RWPE1 (cell line): ENCODE measurements at regions of chr20 and their contacts with region 1.

Region 1: DNA sequence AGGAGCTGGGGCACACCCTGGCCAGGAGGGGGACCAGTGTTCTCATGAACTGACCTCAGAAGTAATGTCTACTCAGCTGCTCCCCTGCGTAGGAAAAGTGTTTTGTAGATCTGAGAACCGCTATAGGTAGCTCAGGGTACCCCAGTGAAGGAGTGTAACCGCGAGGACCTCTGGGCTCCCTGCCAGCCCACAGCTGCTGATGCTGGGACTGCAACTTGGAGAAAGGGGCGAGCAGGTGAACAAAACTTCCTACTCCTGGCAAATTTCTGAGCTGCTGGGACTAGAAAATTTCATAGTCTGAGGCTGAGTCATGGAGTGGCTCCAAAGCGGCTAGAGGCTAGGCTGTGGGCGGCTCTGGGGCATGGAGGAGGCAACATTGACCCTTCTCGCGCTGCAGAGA is 51.9 kb downstream of the PYGB start:
- DNase-seq: peak; percentile 32
- H3K27ac ChIP-seq: peak overlapping the region; percentile 73
- CTCF ChIP-seq: no peak

Region 2: GRCh38 chr20:25195014-25195961 is 104.5 kb before region 1 on chr20 and contains the start of gene ENTPD6:
- CTCF ChIA-PET with region 1: no interaction called
- POLR2A ChIA-PET with region 1: no interaction called
- DNase-seq: peak; percentile 99
- H3K27ac ChIP-seq: peak within 1 kb of the TSS; percentile 78
- CTCF ChIP-seq: no peak; the same call in 1 of the 2 replicates

Region 3: GRCh38 chr20:25399037-25399430 is 99.2 kb after region 1 on chr20:
- CTCF ChIA-PET with region 1: interaction called, 10 read pairs
- POLR2A ChIA-PET with region 1: no interaction called
- DNase-seq: peak; percentile 65
- H3K27ac ChIP-seq: no peak overlapping the region
- CTCF ChIP-seq: peak; percentile 80